Aorta (tissue), 5 donors: ENCODE measurements at regions of chr3 and their contacts with region 1.

Region 1: DNA sequence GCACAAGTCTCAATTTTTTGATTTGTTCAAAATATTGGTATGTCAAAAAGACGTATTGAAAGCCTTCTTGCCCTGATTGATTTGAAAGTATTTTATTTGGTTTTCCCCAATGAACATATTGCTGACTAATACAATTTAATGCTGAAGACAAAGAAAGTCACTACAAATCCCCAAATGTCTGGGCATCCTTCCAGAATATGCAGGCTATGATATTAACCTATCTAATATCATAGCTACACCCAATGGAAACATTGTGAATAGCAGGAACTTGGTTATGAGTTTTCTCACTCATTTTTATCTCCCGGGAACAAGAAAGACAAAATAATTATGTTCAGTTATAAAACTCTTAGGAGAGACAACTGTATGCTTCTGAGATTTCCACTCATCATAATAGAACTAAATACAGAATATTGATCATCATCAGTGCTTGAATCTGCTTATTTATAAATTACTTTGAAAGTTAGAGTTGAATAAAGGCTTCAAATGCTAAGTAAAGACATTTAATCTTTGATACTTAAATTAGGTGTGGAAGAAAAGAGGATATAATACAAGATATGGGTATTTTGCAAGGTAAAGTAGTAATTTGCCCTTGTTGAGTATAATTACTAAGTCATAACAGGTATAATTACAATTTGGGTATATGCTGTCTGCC is 483.9 kb downstream of the RBMS3 start:
- DNase-seq: no peak
- ATAC-seq: peak; percentile 76
- H3K4me3 ChIP-seq: no peak overlapping the region
- H3K27ac ChIP-seq: no peak overlapping the region
- H3K4me1 ChIP-seq: peaks cover 0 to 7% of the 10 kb centered on the region in 2 donors
- H3K27me3 ChIP-seq: no peaks in the 10 kb centered on the region

Region 2: DNA sequence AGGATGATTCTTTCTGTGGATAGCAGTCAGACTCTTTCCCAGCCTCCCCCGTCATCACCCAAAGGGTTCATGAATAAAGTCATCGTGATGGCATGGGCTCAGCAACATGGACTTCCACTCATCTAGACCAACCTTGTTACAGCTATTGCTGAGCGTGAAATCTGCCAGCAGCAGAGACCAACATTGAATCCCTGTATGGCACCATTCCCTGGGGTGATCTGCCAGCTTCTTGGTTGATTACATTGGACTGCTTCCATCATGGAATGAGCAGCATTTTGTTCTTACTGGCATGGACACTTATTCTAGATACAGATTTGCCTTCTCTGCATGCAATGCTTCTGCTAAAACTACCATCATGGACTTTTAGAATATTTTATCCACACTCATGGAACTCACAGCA is 1220.5 kb before region 1 on chr3:
- intact Hi-C with region 1: no loop called
- DNase-seq: peak in 1 of 2 donors; percentile 52
- ATAC-seq: no peak
- H3K4me3 ChIP-seq: no peak overlapping the region
- H3K27ac ChIP-seq: no peak overlapping the region
- H3K4me1 ChIP-seq: peaks cover 0 to 2% of the 10 kb centered on the region in 2 donors
- H3K27me3 ChIP-seq: no peaks in the 10 kb centered on the region

Region 3: DNA sequence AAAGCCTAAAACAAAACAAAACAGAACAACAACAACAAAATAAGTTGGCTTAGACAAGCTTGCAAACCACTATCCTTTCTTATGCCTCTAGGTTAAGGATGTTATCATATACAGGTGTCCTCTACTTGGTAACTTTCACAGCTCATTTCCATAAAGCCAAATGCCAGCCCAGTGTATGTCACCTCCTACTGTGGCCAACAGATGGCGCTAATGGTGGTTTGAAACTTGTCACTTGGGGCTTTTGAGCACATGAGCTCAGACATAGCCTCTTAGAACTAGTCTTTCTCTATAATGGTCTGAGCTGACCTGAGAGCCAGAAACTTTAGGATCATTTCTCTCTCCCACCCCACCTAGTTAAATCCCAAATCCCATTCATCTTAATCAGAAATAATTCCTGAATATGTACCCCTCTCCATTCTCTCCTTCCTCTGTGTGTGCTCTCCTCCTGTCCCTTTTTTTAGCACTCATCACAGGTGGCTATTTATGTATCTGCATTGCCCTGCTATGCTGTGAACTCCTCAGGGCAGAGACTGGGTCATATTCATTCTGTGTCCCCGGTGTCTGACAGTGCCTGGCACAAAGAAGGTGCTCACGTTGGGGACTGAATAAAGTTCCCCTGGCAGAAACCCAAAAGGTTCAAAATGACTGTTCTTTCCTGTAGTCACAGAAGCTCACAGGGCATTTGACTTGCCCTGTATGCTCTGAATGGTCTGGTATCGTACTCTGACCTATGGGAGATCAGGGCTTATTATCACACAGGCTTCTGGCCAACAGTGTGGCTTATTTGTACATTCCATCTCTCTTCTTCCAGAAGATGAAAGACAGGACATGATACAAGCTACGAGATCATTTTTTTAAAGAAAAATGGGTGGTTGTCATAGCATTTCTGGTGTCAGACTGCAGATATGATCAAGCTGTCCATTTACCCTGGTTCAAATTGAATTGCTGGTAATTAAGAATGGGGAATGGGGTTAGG is 1096.8 kb before region 1 on chr3:
- intact Hi-C with region 1: loop called in 1 of 2 experiments (anchors 10 kb)
- DNase-seq: peak in 1 of 2 donors; percentile 49
- ATAC-seq: peak; percentile 84
- H3K4me3 ChIP-seq: no peak overlapping the region
- H3K27ac ChIP-seq: no peak overlapping the region
- H3K4me1 ChIP-seq: peaks cover 0 to 6% of the 10 kb centered on the region in 2 donors
- H3K27me3 ChIP-seq: no peaks in the 10 kb centered on the region

Region 4: GRCh38 chr3:28916713-28917499 is 847.8 kb before region 1 on chr3:
- intact Hi-C with region 1: loop called (anchors 5 kb)
- DNase-seq: peak; percentile 80 to 81
- ATAC-seq: peak; percentile 90
- H3K4me3 ChIP-seq: no peak overlapping the region
- H3K27ac ChIP-seq: peak overlapping the region in 1 of 2 donors; percentile 23
- H3K4me1 ChIP-seq: no peaks in the 10 kb centered on the region
- H3K27me3 ChIP-seq: no peaks in the 10 kb centered on the region

Region 5: DNA sequence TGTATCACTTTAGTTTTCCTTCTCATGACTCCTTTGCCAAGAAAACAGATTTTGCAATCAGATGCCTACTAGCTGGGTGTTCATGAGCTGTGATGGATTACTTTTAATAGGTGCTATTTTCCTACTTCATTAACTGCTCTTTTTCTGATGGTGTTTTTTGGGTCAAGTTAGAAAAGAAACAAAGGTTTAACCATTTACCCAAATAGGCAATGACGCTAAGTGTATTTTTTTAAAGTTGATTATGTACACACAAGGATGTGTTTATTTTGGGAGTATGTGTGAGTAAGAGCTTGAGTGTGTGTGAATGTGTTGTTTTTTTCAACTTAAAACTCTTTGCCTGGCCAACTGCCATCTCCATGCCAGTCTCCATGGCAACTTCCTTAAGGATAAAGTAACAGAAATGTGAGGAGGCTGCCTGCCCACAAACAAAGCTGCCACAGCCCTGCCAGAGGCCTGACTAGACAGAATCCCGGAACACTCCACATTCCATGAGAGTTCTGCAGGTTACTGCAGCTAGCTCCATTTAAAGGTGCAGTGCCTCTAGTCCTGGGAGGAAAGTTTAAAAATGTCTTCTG is 699.4 kb before region 1 on chr3:
- intact Hi-C with region 1: loop called in 1 of 2 experiments (anchors 5 kb)
- DNase-seq: peak; percentile 92 to 93
- ATAC-seq: peak; percentile 92
- H3K4me3 ChIP-seq: no peak overlapping the region
- H3K27ac ChIP-seq: no peak overlapping the region
- H3K4me1 ChIP-seq: no peaks in the 10 kb centered on the region
- H3K27me3 ChIP-seq: no peaks in the 10 kb centered on the region

Region 6: DNA sequence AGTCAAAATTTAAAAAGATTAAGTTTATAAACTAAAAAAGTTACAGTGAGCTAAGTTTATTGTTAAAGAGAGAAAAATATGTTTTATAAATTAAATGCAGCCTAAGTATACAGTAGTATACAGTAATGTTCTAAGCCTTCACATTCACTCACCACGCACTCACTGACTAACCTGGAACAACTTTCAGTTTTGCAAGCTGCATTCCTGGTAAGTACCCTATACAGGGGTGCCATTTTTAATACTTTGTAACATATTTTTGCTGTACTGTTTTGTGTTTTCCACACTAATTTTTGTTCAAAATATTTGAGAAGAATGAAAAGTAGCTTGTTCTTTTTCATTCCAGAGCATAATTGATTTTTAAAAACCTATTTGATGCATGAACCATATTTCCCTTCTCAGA is 41.0 kb after region 1 on chr3:
- intact Hi-C with region 1: no loop called
- DNase-seq: no peak
- ATAC-seq: no peak
- H3K4me3 ChIP-seq: no peak overlapping the region
- H3K27ac ChIP-seq: no peak overlapping the region
- H3K4me1 ChIP-seq: no peaks in the 10 kb centered on the region
- H3K27me3 ChIP-seq: no peaks in the 10 kb centered on the region

Region 7: GRCh38 chr3:29850641-29851040 is 85.9 kb after region 1 on chr3:
- intact Hi-C with region 1: no loop called
- DNase-seq: no peak
- ATAC-seq: no peak
- H3K4me3 ChIP-seq: no peak overlapping the region
- H3K27ac ChIP-seq: no peak overlapping the region
- H3K4me1 ChIP-seq: peaks cover 2% of the 10 kb centered on the region in 2 donors
- H3K27me3 ChIP-seq: no peaks in the 10 kb centered on the region

Region 8: GRCh38 chr3:29880809-29881208 is 116.1 kb after region 1 on chr3:
- intact Hi-C with region 1: no loop called
- DNase-seq: no peak
- ATAC-seq: no peak
- H3K4me3 ChIP-seq: no peak overlapping the region
- H3K27ac ChIP-seq: no peak overlapping the region
- H3K4me1 ChIP-seq: no peaks in the 10 kb centered on the region
- H3K27me3 ChIP-seq: no peaks in the 10 kb centered on the region